ENCODE measurements at regions of chr14 and their contacts with region 1.

Region 1: DNA sequence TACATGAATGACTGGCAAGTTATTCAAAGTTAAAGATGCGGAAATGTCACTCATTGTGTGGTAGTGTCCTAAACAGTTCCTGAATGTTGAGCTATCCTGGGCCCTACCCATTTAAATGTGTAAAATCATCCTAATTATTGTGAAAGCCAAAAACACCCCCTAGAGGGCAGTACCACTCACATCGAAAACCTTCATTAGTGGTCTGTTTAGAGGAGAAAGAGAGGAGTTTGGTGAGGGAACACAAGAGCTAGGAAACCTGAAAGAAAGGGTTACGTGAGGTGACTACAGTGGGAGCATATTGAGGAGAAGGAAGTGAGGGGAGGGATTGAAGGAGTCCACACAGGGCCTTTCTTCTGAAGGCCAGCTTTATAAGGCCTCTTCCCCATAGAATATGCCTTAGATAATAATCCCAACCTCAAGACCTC is 2.5 kb upstream of the TEP1 start:
- DNase-seq: peak in 3 of 7 donors; percentile 38 to 56 (median 42)
- H3K4me3 ChIP-seq: no peak overlapping the region
- H3K27ac ChIP-seq: no peak overlapping the region
- H3K4me1 ChIP-seq: peaks cover 6 to 24% of the 10 kb centered on the region in 2 donors
- H3K27me3 ChIP-seq: no peaks in the 10 kb centered on the region
- CTCF ChIP-seq: peak; percentile 41 to 63 (median 54)
- POLR2A ChIP-seq: no peak

Region 2: GRCh38 chr14:20454516-20455354 is 38.9 kb after region 1 on chr14 and contains the starts of genes APEX1 and OSGEP:
- intact Hi-C with region 1: loop called in 1 of 2 experiments (anchors 5 kb)
- DNase-seq: peak; percentile 97 to 100 (median 99)
- H3K4me3 ChIP-seq: peak within 1 kb of the TSS; percentile 3 to 75 (median 67)
- H3K27ac ChIP-seq: peak within 1 kb of the TSS; percentile 87 to 95 (median 94)
- H3K4me1 ChIP-seq: peaks cover 16 to 34% of the 10 kb centered on the region in 2 donors
- H3K27me3 ChIP-seq: no peaks in the 10 kb centered on the region
- CTCF ChIP-seq: peak in 3 of 6 experiments; percentile 13 to 26 (median 14)
- POLR2A ChIP-seq: peak; percentile 69 to 96
- total RNA-seq, gene APEX1: 98.4 to 206 (median 165) TPM
- total RNA-seq, gene OSGEP: 25.0 to 57.2 (median 37.4) TPM

Region 3: GRCh38 chr14:20469242-20469889 is 53.6 kb after region 1 on chr14 and contains the start of gene PNP:
- intact Hi-C with region 1: loop called in 1 of 2 experiments (anchors 5 kb)
- DNase-seq: peak; percentile 86 to 97 (median 93)
- H3K4me3 ChIP-seq: peak within 1 kb of the TSS in 3 of 4 donors; percentile 75 to 83 (median 77)
- H3K27ac ChIP-seq: peak within 1 kb of the TSS; percentile 3 to 93 (median 86)
- H3K4me1 ChIP-seq: peaks cover 8 to 15% of the 10 kb centered on the region in 2 donors
- H3K27me3 ChIP-seq: no peaks in the 10 kb centered on the region
- CTCF ChIP-seq: no peak
- POLR2A ChIP-seq: peak; percentile 98 to 99
- total RNA-seq, gene PNP: 5.4 to 57.5 (median 17.4) TPM